GM13977 (cell line): ENCODE measurements at regions of chr4 and their contacts with region 1.

Region 1: GRCh38 chr4:76748649-76749048 is 149.3 kb downstream of the SOWAHB start:
- DNase-seq: peak; percentile 57
- CTCF ChIP-seq: peak; percentile 56

Region 2: GRCh38 chr4:76511947-76512346 is 236.7 kb before region 1 on chr4:
- in situ Hi-C with region 1: loop called (anchors 5 kb)
- DNase-seq: no peak
- CTCF ChIP-seq: no peak

Region 3: DNA sequence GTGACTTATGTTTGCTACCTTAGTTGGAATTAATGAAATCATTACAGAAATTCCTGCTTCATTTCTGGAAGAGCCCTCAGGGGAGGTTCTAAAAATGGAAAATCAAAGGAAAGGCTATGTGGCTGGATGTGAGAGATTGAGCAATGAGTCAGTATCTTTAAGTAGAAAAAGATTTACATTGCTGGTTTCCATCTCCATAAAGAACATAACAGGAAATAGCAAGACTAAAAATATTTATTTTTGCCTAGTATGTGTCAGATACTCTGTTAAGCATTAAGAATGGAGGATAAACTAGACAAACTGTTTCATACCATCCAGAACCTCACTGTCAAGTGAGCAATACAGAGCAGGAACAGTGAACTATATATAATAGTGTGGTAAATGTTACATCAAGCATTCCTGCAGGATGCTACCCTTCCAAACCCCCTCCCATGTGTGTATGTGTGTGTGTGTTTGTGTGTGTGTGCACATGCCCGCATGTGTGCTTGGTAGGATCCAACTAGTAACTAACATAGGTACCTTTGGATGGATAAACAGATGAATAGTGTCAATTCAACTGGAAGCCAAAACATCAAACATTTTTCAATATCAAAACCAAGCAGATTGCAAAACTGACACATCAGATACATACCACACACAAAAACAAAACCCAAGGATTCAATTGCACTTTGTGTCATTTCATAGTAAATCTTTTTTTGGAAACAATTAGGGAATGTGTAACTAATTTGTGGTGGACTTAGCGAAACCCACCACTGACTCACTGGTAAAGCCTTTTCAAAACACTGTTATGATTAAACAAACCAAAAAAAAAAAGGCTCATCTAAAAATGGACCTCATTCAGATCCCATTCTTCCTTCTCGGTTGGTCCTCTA is 90.2 kb before region 1 on chr4:
- in situ Hi-C with region 1: no loop called
- DNase-seq: no peak
- CTCF ChIP-seq: no peak